ENCODE measurements at regions of chr18 and their contacts with region 1.

Region 1: GRCh38 chr18:2932247-2933181 is 80.4 kb downstream of the LPIN2 start:
- DNase-seq: no peak
- ATAC-seq: peak; percentile 60
- H3K4me3 Mint-ChIP-seq: peak overlapping the region; percentile 10
- H3K27ac Mint-ChIP-seq: peak overlapping the region; percentile 76
- H3K4me1 Mint-ChIP-seq: peaks cover 29% of the 10 kb centered on the region
- H3K27me3 Mint-ChIP-seq: no peaks in the 10 kb centered on the region

Region 2: GRCh38 chr18:2958819-2959298 is 26.3 kb after region 1 on chr18:
- CTCF ChIA-PET with region 1: interaction called, 10 read pairs
- DNase-seq: peak; percentile 83
- ATAC-seq: peak; percentile 40
- H3K4me3 Mint-ChIP-seq: peak overlapping the region; percentile 50
- H3K27ac Mint-ChIP-seq: peak overlapping the region; percentile 100
- H3K4me1 Mint-ChIP-seq: peaks cover 88% of the 10 kb centered on the region
- H3K27me3 Mint-ChIP-seq: no peaks in the 10 kb centered on the region

Region 3: GRCh38 chr18:2985628-2986027 is 53.1 kb after region 1 on chr18:
- CTCF ChIA-PET with region 1: interaction called, 48 read pairs
- DNase-seq: no peak
- ATAC-seq: no peak
- H3K4me3 Mint-ChIP-seq: no peak overlapping the region
- H3K27ac Mint-ChIP-seq: peak overlapping the region; percentile 11
- H3K4me1 Mint-ChIP-seq: peaks cover 74% of the 10 kb centered on the region
- H3K27me3 Mint-ChIP-seq: no peaks in the 10 kb centered on the region

Region 4: DNA sequence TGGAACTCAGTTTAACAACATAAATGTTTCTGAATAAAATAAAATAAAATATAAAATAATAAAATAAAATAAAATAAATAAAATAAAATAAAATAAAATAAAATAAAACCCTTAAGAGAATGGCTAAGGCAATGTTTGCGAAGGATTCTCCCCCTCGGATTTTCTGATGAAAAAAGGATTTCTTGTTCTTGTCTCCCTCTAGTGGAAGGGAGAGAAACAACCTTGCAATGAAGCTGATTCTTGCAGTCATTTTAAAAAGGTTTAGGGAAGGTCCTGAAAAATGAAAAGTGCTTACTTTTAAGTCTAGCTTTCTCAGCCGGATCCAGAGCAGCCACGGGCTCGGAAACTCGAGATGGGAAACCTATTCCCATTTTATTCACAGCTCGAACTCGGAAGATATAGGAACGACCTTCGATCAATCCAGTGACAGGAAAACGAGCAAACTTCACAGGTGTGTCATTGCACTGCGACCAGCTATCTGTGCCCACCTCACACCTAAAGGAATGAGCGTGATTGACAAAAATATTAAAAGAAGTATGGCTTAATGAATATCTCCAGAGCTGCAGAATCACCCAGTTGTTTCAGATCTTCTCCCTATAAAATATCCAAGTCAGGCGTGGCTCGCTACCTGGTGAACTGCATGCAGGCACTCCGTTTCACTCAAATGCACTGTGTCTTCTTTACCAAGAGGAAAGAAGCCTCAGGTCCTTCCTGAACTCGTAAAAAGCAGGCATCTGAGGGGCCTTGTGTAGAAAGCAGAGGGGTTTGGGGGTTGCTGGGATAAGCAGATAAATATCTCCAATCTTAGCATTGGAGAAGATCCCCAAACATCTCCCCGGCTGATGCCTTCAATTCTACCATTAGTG is 219.1 kb after region 1 on chr18:
- CTCF ChIA-PET with region 1: interaction called, 19 read pairs
- DNase-seq: no peak
- ATAC-seq: no peak
- H3K4me3 Mint-ChIP-seq: no peak overlapping the region
- H3K27ac Mint-ChIP-seq: no peak overlapping the region
- H3K4me1 Mint-ChIP-seq: peaks cover 1% of the 10 kb centered on the region
- H3K27me3 Mint-ChIP-seq: no peaks in the 10 kb centered on the region

Measured in activated CD8-positive, alpha-beta memory T cell treated with anti-CD3 and anti-CD28 coated beads, Interleukin-2, amount 10 ng/mL, durations not matched to agents 7 days and 5 days (primary cell).